ENCODE measurements at regions of chr20 and their contacts with region 1.

Region 1: GRCh38 chr20:50540620-50541605 is 30.7 kb downstream of the PTPN1 start:
- DNase-seq: no peak
- H3K4me3 ChIP-seq: no peak overlapping the region
- H3K27ac ChIP-seq: no peak overlapping the region
- H3K4me1 ChIP-seq: peaks cover 4% of the 10 kb centered on the region
- H3K27me3 ChIP-seq: no peaks in the 10 kb centered on the region
- CTCF ChIP-seq: no peak

Region 2: GRCh38 chr20:50516180-50516934 is 24.6 kb before region 1 on chr20:
- CTCF ChIA-PET with region 1: no interaction called
- POLR2A ChIA-PET with region 1: no interaction called
- intact Hi-C with region 1: no loop called
- DNase-seq: no peak
- H3K4me3 ChIP-seq: no peak overlapping the region
- H3K27ac ChIP-seq: no peak overlapping the region
- H3K4me1 ChIP-seq: peaks cover 65% of the 10 kb centered on the region
- H3K27me3 ChIP-seq: no peaks in the 10 kb centered on the region
- CTCF ChIP-seq: no peak

Region 3: DNA sequence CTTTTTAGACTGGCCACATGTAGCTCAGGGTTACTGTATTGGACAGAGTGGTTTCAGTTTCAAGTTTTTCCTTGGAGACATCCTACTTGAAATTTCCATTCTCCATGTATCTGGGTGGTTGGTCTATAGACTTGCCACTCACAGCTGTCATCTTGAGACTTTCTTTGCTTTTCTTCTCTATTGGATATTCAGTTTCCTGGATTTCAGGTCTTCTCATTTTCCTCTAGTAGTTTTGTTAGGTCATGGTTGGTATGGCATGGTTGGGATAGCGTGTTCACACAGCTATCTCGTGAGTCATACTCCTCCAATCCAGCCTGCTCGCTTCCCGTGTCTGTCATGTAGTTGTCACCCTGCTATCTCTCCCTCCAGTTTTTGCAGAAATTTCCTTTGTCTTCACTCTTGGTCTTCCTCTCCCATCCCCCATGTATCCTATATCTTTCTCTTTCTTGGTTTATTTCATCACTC is 17.6 kb after region 1 on chr20:
- CTCF ChIA-PET with region 1: no interaction called
- POLR2A ChIA-PET with region 1: interaction called, 18 read pairs
- intact Hi-C with region 1: no loop called
- DNase-seq: no peak
- H3K4me3 ChIP-seq: no peak overlapping the region
- H3K27ac ChIP-seq: no peak overlapping the region
- H3K4me1 ChIP-seq: peaks cover 31% of the 10 kb centered on the region
- H3K27me3 ChIP-seq: no peaks in the 10 kb centered on the region
- CTCF ChIP-seq: no peak